Naive thymus-derived CD8-positive, alpha-beta T cell (primary cell): ENCODE measurements at regions of chr15 and their contacts with region 1.

Region 1: DNA sequence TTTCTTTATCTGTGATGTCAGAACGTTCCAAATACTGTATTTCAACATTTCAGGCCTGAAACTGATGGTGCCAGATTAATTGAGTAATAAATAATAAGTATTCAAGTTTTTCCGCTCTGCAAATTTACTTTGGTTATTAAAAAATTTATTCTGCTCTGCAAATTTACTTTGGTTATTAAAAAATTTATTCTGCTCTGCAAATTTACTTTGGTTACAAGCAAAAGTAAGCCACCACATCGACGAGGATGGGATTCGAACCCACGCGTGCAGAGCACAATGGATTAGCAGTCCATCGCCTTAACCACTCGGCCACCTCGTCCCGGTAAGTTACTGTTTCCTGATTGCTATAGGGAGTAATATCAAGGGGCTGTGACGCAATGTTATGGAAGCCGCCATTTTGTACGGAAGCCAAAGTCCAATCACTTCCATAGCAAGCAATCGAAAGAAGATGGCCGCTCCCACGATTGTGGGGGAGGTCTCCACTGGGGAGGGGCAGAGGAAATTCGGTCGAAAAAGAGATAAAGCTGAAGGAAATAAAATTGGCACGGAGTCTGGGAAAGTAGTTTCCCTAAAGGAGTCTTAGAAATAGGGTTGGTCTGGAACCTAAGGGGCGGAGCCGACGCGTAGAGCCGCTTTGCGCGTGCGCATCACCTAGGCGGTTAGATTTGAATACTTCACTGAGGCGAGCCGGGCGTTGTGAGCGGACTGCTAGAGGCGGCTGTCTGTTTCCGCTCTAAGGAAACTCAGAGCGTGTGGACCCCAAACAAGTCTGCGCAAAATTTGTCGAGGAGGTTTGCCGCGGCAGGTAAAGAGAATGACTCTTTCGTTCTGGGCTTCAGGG is at the start of gene KNL1:
- DNase-seq: peak; percentile 76 to 97 (median 85)
- ATAC-seq: peak; percentile 80 to 85
- H3K4me3 Mint-ChIP-seq: peak within 1 kb of the TSS; percentile 93 to 100 (median 96)
- H3K27ac Mint-ChIP-seq: peak within 1 kb of the TSS; percentile 96 to 99 (median 98)
- H3K4me1 Mint-ChIP-seq: peaks cover 10 to 38% (median 23%) of the 10 kb centered on the region in 4 donors
- H3K27me3 Mint-ChIP-seq: peaks cover 4 to 16% (median 9%) of the 10 kb centered on the region in 5 donors
- polyA plus RNA-seq, gene KNL1: 0.03 TPM in 1 of 3 donors, not detected in the others

Region 2: DNA sequence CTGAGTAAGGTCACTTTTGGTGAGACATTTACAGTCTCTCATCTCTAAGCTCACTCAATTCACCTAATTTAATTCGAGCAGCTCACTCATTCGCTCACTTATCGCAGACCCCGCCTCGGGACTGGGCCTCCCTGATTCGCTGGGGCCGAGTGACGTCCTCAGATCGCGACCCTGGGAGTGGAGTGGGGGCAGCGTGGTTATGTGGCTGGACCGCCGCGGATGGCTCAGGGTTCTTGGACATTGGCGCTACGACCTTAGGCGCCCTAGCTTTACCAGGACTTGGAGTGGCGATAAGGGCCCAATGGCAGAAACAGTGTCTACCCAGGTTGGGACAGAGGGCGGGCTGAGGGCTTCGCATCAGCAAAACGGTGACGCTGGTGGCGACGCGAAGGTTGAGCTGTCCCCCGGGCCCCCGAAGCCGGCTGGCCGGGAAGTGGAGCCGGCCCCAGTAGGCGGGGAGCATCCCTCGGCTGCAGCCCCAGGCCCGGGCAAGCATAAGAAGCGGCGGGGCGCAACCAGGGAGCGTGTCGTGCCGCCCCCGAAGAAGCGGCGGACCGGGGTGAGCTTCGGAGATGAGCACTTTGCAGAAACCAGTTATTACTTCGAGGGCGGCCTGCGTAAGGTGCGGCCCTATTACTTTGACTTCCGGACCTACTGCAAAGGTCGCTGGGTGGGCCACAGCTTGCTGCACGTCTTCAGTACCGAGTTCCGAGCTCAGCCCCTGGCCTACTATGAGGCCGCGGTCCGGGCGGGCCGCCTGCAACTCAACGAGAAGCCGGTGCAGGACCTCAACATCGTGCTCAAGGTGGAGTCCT is 24.5 kb before region 1 on chr15 and contains the start of gene RPUSD2:
- POLR2A ChIA-PET with region 1: interaction called, 13 read pairs
- DNase-seq: peak; percentile 85 to 96 (median 92)
- ATAC-seq: peak; percentile 66 to 69
- H3K4me3 Mint-ChIP-seq: peak within 1 kb of the TSS; percentile 94 to 99 (median 98)
- H3K27ac Mint-ChIP-seq: peak within 1 kb of the TSS; percentile 97 to 100 (median 99)
- H3K4me1 Mint-ChIP-seq: peaks cover 12 to 54% (median 48%) of the 10 kb centered on the region in 4 donors
- H3K27me3 Mint-ChIP-seq: peaks cover 0 to 2% (median 0%) of the 10 kb centered on the region in 5 donors
- polyA plus RNA-seq, gene RPUSD2: 18.7 to 23.3 (median 22.2) TPM